K562 (cell line): ENCODE measurements at regions of chr4 and their contacts with region 1.

Region 1: GRCh38 chr4:3322059-3322550 is 29.3 kb downstream of the RGS12 start:
- DNase-seq: peak in 1 of 4 experiments; percentile 14
- ATAC-seq: no peak
- H3K4me3 ChIP-seq: no peak overlapping the region
- H3K27ac ChIP-seq: no peak overlapping the region
- H3K4me1 ChIP-seq: peaks cover 0 to 31% of the 10 kb centered on the region in 2 experiments; a peak in 2 of 5 replicates
- H3K27me3 ChIP-seq: no peaks in the 10 kb centered on the region
- CTCF ChIP-seq: no peak
- EP300 ChIP-seq: no peak
- POLR2A ChIP-seq: no peak
- RAD21 ChIP-seq: no peak

Region 2: GRCh38 chr4:3106339-3107186 is 215.5 kb before region 1 on chr4:
- CTCF ChIA-PET with region 1: interaction called, 3 read pairs
- POLR2A ChIA-PET with region 1: no interaction called
- in situ Hi-C with region 1: no loop called
- intact Hi-C with region 1: loop called (anchors 10 kb)
- DNase-seq: peak; percentile 85 to 88 (median 87)
- ATAC-seq: peak; percentile 100
- H3K4me3 ChIP-seq: no peak overlapping the region
- H3K27ac ChIP-seq: no peak overlapping the region
- H3K4me1 ChIP-seq: no peaks in the 10 kb centered on the region; a peak in 1 of 5 replicates
- H3K27me3 ChIP-seq: no peaks in the 10 kb centered on the region
- CTCF ChIP-seq: peak; percentile 91 to 98 (median 97)
- EP300 ChIP-seq: 0 out of 2 replicates have a peak, but pooled peaks have one; percentile 7
- POLR2A ChIP-seq: no peak
- RAD21 ChIP-seq: peak; percentile 83 to 92

Region 3: DNA sequence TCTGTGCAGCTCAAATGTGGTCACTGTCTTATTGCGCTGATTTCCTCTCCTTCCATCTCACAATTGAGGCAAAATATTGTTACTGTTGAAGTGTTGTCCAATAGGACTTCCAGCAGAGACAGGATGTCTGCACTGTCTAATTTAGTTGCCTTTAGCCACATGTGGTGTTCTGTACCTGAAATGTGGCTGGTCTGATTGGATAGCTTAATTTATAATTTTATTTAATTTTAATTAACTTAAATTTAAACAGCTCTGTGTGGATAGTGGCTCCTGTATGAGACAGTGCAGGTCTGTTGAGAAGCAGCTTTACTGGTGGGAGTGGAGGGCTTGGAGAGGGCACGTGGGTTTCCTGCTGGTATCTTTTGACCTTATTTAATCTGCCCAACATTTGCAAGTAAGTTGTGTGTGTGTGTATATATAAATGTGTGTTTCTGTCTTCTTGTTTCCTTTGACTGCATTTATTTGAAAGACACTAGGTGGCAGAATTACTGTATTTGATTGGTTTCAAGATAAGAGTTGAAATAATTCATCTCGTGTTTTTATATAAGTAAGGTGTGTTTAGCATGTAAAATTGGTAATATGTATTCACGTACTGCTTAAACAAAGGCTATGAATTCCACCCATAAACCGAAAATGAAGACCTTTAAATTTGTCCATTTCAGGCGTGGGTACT is 128.4 kb before region 1 on chr4:
- CTCF ChIA-PET with region 1: interaction called, 6 read pairs
- POLR2A ChIA-PET with region 1: no interaction called
- in situ Hi-C with region 1: no loop called
- intact Hi-C with region 1: loop called (anchors 10 kb)
- DNase-seq: no peak
- ATAC-seq: no peak
- H3K4me3 ChIP-seq: no peak overlapping the region
- H3K27ac ChIP-seq: no peak overlapping the region
- H3K4me1 ChIP-seq: no peaks in the 10 kb centered on the region
- H3K27me3 ChIP-seq: no peaks in the 10 kb centered on the region
- CTCF ChIP-seq: peak; percentile 22 to 64 (median 23); a peak in 3 of 6 replicates
- EP300 ChIP-seq: no peak
- POLR2A ChIP-seq: no peak
- RAD21 ChIP-seq: peak; percentile 44 to 65; a peak in 3 of 4 replicates

Region 4: DNA sequence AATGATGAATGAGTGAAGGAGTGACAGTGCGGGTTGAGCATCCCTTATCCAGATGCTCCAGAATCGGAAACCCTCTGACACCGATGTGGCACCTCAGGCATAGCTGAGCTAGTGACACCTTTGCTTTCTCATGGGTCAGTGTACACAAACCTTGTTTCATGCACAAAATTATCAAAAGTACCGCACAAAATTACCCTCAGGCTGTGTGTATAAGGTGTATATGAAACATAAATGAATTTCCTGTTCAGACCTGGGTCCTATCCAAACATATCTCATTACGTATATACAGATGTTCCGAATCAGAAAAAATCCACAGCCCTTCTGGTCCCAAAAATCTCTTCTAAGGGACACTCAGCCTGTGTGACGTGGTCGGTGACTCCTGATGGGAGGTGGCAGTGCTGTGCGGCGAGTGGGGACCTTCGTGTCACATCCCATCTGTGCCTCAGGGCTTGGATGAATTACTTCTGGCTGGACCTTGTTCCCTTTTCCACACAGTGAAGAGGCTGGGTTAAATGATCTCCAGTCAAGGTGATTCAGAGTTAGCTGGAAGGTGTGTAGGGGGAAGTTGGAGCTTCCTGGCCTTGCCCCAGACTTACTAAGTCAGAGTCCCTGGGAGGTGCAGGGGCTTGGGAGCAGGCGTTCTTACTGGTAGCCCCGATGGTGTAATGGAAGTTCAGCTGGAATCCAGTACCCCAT is 10.5 kb before region 1 on chr4:
- CTCF ChIA-PET with region 1: no interaction called
- POLR2A ChIA-PET with region 1: interaction called, 10 read pairs
- in situ Hi-C with region 1: no loop called
- intact Hi-C with region 1: no loop called
- DNase-seq: no peak
- ATAC-seq: no peak
- H3K4me3 ChIP-seq: no peak overlapping the region
- H3K27ac ChIP-seq: no peak overlapping the region
- H3K4me1 ChIP-seq: no peaks in the 10 kb centered on the region; a peak in 1 of 5 replicates
- H3K27me3 ChIP-seq: peaks cover 0 to 33% of the 10 kb centered on the region in 2 experiments; a peak in 3 of 5 replicates
- CTCF ChIP-seq: no peak
- EP300 ChIP-seq: no peak
- POLR2A ChIP-seq: no peak
- RAD21 ChIP-seq: no peak